ENCODE measurements at regions of chr16 and their contacts with region 1.

Region 1: DNA sequence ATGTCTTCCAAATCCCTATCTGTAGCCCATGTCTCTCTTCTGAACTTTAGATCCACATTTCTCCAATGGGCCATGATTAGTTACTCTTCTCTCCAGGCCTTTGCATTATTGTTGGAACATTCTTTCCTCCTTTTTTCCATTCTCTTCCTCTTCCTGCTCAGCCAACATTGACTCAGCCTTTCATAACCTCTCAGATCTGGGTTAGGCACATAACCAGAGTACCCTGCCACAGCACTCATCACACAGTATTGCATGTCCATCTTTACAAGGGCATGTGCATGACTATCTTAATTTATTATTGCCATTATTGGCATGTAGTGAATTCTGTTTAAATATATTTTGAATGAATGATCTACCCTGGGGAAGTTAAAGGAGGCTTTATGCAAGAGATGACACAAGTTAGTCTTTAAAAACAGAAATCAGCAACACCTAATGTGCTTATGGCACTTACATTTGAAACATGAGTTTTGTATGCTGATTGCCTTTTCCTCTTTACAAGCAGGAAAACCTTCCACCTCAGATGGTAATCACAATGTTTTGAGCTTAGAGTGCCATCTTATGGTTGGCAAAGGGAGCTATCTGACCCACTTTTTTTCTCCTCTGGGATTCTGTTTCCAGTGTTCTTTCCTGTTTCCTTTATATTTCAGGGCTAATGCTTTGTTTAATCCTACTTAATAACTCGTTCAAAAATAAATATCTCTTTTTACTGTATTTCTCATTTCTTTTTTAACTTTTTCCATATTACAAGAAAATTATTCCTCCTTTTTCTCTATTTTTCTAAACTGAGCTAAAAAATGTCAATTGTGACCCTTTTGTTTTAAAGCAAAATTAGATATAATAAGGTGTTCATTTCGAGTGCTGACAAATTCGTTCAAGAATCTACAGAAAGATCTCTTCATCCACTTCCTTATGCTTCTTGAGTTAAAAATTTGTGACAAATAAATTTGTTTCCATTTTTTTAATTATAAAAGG is 151.0 kb upstream of the RBL2 start:
- DNase-seq: peak; percentile 60
- H3K4me3 Mint-ChIP-seq: no peak overlapping the region
- H3K27ac Mint-ChIP-seq: no peak overlapping the region
- H3K4me1 Mint-ChIP-seq: no peaks in the 10 kb centered on the region
- H3K27me3 Mint-ChIP-seq: no peaks in the 10 kb centered on the region
- CTCF ChIP-seq: peak; percentile 46

Region 2: DNA sequence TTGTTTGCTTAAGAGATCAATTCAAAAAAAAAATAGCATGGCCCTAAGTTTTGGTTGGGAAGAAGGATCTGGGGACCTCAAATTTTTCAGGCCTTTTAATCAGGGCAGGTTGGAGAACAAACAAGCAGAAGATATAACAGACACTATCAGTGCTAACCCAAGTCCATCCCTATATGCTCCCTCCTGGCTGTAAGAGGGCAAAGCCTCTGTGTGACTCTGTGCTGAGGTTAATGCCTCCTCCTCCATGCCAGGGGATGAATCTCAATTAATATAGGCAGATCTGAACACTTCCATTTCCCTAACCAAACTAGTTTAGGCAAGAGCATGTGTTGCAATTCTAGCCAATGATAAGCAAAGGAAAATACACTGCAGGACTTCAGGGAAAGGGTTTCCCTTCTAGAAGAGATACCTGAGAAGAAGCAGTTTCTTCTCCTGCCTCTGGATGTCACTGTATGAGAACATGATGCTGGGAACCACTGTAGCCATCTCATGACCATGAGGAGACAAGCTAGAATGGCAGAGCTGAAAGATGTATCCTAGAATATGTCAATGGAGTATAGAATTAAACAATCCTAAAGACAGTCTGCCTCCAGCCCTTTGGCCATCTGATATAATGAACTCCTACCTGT is 306.6 kb before region 1 on chr16:
- CTCF ChIA-PET with region 1: no interaction called
- POLR2A ChIA-PET with region 1: no interaction called
- intact Hi-C with region 1: loop called (anchors 1 kb)
- DNase-seq: peak; percentile 60
- H3K4me3 Mint-ChIP-seq: no peak overlapping the region
- H3K27ac Mint-ChIP-seq: no peak overlapping the region
- H3K4me1 Mint-ChIP-seq: no peaks in the 10 kb centered on the region
- H3K27me3 Mint-ChIP-seq: peaks cover 14% of the 10 kb centered on the region
- CTCF ChIP-seq: peak; percentile 19

Region 3: GRCh38 chr16:53130159-53131049 is 152.9 kb before region 1 on chr16:
- CTCF ChIA-PET with region 1: no interaction called
- POLR2A ChIA-PET with region 1: no interaction called
- intact Hi-C with region 1: loop called (anchors 2 kb)
- DNase-seq: peak; percentile 93
- H3K4me3 Mint-ChIP-seq: peak overlapping the region; percentile 94
- H3K27ac Mint-ChIP-seq: peak overlapping the region; percentile 89
- H3K4me1 Mint-ChIP-seq: peaks cover 23% of the 10 kb centered on the region
- H3K27me3 Mint-ChIP-seq: no peaks in the 10 kb centered on the region
- CTCF ChIP-seq: peak; percentile 61